Body of pancreas (tissue), 4 donors: ENCODE measurements at regions of chr11 and their contacts with region 1.

Region 1: GRCh38 chr11:111582163-111582562 is 20.1 kb upstream of the SIK2 start:
- DNase-seq: no peak
- ATAC-seq: no peak
- H3K4me3 ChIP-seq: no peak overlapping the region
- H3K27ac ChIP-seq: no peak overlapping the region
- H3K4me1 ChIP-seq: no peaks in the 10 kb centered on the region
- H3K27me3 ChIP-seq: no peaks in the 10 kb centered on the region
- CTCF ChIP-seq: no peak
- POLR2A ChIP-seq: no peak

Region 2: DNA sequence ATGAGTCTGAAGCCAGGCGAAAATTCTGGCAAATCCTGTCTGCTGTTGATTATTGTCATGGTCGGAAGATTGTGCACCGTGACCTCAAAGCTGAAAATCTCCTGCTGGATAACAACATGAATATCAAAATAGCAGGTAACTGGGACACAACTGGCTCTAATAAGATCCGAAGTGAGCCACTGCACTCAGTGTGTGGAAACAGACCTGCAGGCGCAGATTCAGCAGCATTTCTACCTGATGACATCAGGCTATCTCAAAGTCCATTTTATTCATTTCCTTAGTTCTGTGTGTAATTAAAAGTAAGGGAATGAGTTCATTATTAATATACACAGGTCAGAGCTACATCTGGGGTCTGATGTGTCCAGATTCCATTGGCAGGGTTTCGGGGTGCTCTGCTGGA is 105.9 kb after region 1 on chr11:
- intact Hi-C with region 1: no loop called
- DNase-seq: peak in 1 of 4 donors; percentile 19
- ATAC-seq: no peak
- H3K4me3 ChIP-seq: no peak overlapping the region
- H3K27ac ChIP-seq: peak overlapping the region in 2 of 4 donors; percentile 15 to 36
- H3K4me1 ChIP-seq: peaks cover 12% of the 10 kb centered on the region
- H3K27me3 ChIP-seq: no peaks in the 10 kb centered on the region
- CTCF ChIP-seq: no peak
- POLR2A ChIP-seq: no peak

Region 3: GRCh38 chr11:111836721-111837120 is 254.6 kb after region 1 on chr11:
- intact Hi-C with region 1: loop called (anchors 5 kb)
- DNase-seq: no peak
- ATAC-seq: no peak
- H3K4me3 ChIP-seq: no peak overlapping the region
- H3K27ac ChIP-seq: peak overlapping the region in 1 of 4 donors; percentile 5
- H3K4me1 ChIP-seq: peaks cover 4% of the 10 kb centered on the region
- H3K27me3 ChIP-seq: no peaks in the 10 kb centered on the region
- CTCF ChIP-seq: no peak
- POLR2A ChIP-seq: no peak